ENCODE measurements at regions of chr13 and their contacts with region 1.

Region 1: GRCh38 chr13:107203146-107203847 is 635.4 kb upstream of the ARGLU1 start:
- DNase-seq: peak; percentile 19 to 60
- H3K4me3 ChIP-seq: no peak overlapping the region
- H3K27ac ChIP-seq: no peak overlapping the region
- H3K4me1 ChIP-seq: no peaks in the 10 kb centered on the region; a peak in 1 of 7 replicates
- H3K27me3 ChIP-seq: no peaks in the 10 kb centered on the region
- CTCF ChIP-seq: peak; percentile 52 to 87 (median 69)
- EP300 ChIP-seq: no peak
- POLR2A ChIP-seq: no peak
- RAD21 ChIP-seq: peak; percentile 61

Region 2: DNA sequence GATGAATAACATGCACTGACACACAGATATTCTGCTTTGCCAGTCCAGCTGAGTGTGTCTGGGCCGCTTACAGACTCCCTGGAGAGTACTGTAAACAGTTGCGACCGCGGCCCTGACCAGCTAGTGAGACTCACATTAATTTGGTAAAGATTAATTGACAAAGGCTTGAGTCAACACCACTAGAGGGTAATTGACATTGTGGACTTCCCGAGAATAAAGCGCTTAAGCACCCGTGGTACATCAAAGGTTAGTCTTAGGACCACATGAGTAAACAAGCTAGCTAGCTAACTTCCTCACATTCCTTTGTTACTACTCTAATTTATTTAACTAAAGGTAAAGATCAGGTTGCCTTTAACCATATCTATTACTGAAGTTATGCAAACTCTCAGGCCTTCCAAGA is 11.0 kb before region 1 on chr13:
- CTCF ChIA-PET with region 1: interaction called, 14 read pairs
- POLR2A ChIA-PET with region 1: no interaction called
- DNase-seq: peak in 1 of 2 experiments; percentile 7
- H3K4me3 ChIP-seq: no peak overlapping the region
- H3K27ac ChIP-seq: no peak overlapping the region
- H3K4me1 ChIP-seq: peaks cover 0 to 3% (median 0%) of the 10 kb centered on the region in 4 experiments; a peak in 3 of 7 replicates
- H3K27me3 ChIP-seq: peaks cover 0 to 7% (median 2%) of the 10 kb centered on the region in 4 experiments; a peak in 4 of 7 replicates
- CTCF ChIP-seq: no peak
- EP300 ChIP-seq: no peak
- POLR2A ChIP-seq: no peak
- RAD21 ChIP-seq: no peak

Region 3: DNA sequence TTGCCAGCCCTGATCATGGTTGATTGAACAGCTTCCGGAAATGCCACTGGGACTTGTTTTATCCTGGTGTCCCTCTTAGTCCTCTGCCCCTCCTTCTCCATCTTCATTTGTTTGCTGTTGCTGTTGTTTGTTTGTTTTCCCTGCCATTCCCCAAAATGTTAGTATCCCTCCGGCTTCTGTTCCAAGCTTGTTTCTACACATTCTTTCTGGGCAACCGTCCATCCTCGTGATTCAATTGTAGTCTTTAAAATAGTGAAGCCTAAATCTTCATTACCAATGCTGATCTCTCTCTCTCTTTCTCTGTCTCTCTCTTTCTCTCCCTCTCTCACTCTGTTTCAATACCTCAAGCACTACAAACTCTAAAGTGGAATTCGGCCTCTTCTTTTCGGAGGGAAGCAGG is 14.0 kb after region 1 on chr13:
- CTCF ChIA-PET with region 1: interaction called, 33 read pairs
- POLR2A ChIA-PET with region 1: no interaction called
- DNase-seq: no peak
- H3K4me3 ChIP-seq: no peak overlapping the region
- H3K27ac ChIP-seq: no peak overlapping the region
- H3K4me1 ChIP-seq: peaks cover 0 to 3% (median 0%) of the 10 kb centered on the region in 4 experiments; a peak in 2 of 7 replicates
- H3K27me3 ChIP-seq: no peaks in the 10 kb centered on the region
- CTCF ChIP-seq: no peak
- EP300 ChIP-seq: no peak
- POLR2A ChIP-seq: no peak
- RAD21 ChIP-seq: no peak

Measured in H1 (cell line).